ENCODE measurements at regions of chr4 and their contacts with region 1.

Region 1: GRCh38 chr4:119041951-119042560 is 93.6 kb upstream of the MYOZ2 start:
- DNase-seq: peak; percentile 63 to 82
- ATAC-seq: peak; percentile 53 to 55
- H3K4me3 ChIP-seq: peak overlapping the region in 2 of 4 donors; percentile 14 to 20
- H3K27ac ChIP-seq: peak overlapping the region; percentile 94 to 98 (median 96)
- H3K4me1 ChIP-seq: peaks cover 64 to 77% of the 10 kb centered on the region in 2 donors
- H3K27me3 ChIP-seq: no peaks in the 10 kb centered on the region
- CTCF ChIP-seq: peak; percentile 72 to 80 (median 77)
- POLR2A ChIP-seq: peak in 1 of 2 donors; percentile 42

Region 2: GRCh38 chr4:118751629-118752323 is 290.3 kb before region 1 on chr4:
- in situ Hi-C with region 1: no loop called
- intact Hi-C with region 1: loop called (anchors 5 kb)
- DNase-seq: no peak
- ATAC-seq: no peak
- H3K4me3 ChIP-seq: no peak overlapping the region
- H3K27ac ChIP-seq: peak overlapping the region in 2 of 4 donors; percentile 22 to 88
- H3K4me1 ChIP-seq: peaks cover 24 to 75% of the 10 kb centered on the region in 2 donors
- H3K27me3 ChIP-seq: no peaks in the 10 kb centered on the region
- CTCF ChIP-seq: no peak
- POLR2A ChIP-seq: no peak

Region 3: DNA sequence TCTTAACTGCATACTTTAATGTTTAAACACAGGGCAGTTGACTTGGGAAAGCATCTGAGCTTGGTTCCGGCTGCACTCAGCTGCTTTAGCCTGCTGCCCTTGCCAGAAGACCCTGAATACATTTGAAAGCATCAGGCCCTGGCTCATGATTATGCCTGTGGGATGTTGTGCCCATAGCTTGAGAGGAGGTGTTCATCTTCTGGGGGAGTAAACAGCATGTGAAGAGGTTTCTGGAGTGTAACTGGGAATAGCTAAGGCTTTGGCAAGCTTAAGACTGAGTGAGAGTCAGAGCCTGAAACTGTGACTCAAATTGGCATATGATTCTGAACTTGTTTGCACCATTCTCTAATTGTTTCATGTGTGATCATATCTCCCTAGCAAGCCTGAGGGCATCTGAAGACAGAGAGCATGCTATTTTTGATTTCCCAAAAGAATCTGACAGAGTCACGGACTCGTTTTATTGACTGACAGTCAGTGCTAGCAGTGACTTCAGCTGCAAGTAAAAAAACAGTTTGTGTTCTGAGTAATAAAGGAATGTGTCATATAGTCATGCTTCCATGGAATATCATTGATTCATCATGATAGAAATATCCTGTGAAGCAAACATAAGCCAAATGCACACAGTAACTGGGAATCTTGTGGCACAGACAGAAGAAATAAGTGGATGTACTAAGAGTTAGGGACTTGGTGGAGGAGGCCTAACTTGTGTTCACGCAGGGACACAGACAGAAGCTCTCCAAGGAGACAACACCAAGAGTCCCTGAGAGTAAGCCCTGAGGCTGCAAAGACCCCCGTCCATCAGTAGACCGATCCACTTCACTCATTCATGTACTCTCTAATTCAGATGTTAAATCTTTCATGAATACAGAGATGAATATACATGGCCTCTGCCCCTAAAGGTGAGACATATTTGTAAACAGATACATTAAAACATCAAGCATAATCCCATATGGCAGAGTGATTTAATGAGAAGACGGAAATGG is 52.7 kb before region 1 on chr4:
- in situ Hi-C with region 1: no loop called
- intact Hi-C with region 1: loop called (anchors 2 kb)
- DNase-seq: peak; percentile 54 to 59
- ATAC-seq: peak; percentile 65 to 71
- H3K4me3 ChIP-seq: peak overlapping the region in 1 of 4 donors; percentile 12
- H3K27ac ChIP-seq: peak overlapping the region; percentile 87 to 99 (median 91)
- H3K4me1 ChIP-seq: peaks cover 80 to 84% of the 10 kb centered on the region in 2 donors
- H3K27me3 ChIP-seq: no peaks in the 10 kb centered on the region
- CTCF ChIP-seq: no peak
- POLR2A ChIP-seq: peak; percentile 70 to 80

Region 4: DNA sequence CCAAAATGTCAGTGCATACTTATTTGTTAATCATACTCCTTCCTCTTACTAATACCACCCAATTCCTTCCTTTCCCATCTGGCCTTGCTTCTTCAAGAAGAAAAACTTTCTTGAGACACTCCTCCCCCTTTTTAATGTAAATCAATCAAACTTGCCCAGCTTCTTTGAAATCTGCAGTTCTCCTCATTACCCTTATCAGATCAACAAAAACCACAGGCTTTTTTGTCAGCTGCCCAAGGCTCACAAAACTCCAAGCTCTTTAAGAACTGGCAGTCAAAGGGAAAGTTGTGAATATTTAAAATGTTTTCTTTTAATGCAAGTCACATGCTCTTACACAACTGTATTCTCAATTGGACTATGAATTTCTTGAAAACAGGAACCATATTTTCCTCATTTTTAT is 82.3 kb after region 1 on chr4:
- in situ Hi-C with region 1: no loop called
- intact Hi-C with region 1: no loop called
- DNase-seq: no peak
- ATAC-seq: no peak
- H3K4me3 ChIP-seq: no peak overlapping the region
- H3K27ac ChIP-seq: no peak overlapping the region
- H3K4me1 ChIP-seq: no peaks in the 10 kb centered on the region
- H3K27me3 ChIP-seq: no peaks in the 10 kb centered on the region
- CTCF ChIP-seq: no peak
- POLR2A ChIP-seq: no peak

Region 5: DNA sequence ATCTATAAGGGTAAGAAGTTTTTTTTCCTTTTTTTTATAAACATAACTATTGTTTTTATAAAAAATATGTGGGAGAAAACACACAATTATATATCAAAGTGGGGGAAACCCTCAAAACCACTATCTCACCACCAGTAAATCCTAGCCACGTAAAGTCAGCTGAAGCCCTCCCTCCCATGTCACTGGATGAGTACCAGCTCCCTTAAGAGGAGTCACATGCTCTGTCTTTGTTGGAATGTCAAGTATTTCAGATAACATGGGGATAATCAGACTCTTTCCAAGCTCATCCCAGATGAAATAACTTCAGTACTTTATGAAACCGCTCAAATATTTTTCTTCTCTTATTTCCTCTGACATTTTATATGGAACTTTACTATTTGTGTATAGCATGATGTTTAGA is 96.0 kb after region 1 on chr4:
- in situ Hi-C with region 1: loop called in 1 of 4 experiments (anchors 10 kb)
- intact Hi-C with region 1: loop called (anchors 1 kb)
- DNase-seq: no peak
- ATAC-seq: no peak
- H3K4me3 ChIP-seq: peak overlapping the region in 2 of 4 donors; percentile 32 to 42
- H3K27ac ChIP-seq: peak overlapping the region; percentile 72 to 89 (median 79)
- H3K4me1 ChIP-seq: peaks cover 41 to 43% of the 10 kb centered on the region in 2 donors
- H3K27me3 ChIP-seq: no peaks in the 10 kb centered on the region
- CTCF ChIP-seq: no peak
- POLR2A ChIP-seq: no peak

Region 6: DNA sequence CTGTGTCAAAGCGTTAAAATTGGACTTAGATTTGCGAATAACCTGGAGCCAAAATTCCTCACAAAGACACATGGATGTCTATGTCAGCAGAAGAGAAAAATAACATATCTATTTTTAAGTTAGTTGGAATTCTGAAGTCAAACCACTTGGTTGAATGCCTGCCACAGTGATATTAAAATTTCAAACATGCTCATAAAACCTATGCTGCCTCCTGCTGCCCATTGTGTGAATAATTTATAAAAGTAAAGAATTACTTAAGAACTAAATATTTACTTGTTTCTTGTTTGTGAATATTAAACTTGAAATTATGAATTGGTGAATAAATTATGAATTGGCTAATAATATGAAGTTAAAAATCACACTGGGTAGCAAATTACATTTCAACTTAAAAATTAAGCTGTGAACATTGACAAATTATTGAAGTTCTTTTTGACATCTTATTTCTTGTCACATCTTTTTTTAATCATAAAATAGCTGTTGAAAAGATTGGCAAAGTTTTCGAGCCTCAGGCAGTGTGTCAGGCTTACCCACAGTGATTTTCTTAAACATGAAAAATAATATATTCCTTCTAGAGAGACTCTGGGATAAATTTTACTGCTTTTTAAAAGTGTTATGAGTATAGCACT is 244.4 kb after region 1 on chr4:
- in situ Hi-C with region 1: loop called in 3 of 4 experiments (anchors 10 kb)
- intact Hi-C with region 1: loop called (anchors 2 kb)
- DNase-seq: peak in 1 of 2 donors; percentile 28
- ATAC-seq: peak; percentile 73 to 80
- H3K4me3 ChIP-seq: peak overlapping the region in 1 of 4 donors; percentile 6
- H3K27ac ChIP-seq: peak overlapping the region; percentile 64 to 77 (median 69)
- H3K4me1 ChIP-seq: peaks cover 57 to 62% of the 10 kb centered on the region in 2 donors
- H3K27me3 ChIP-seq: no peaks in the 10 kb centered on the region
- CTCF ChIP-seq: peak; percentile 48 to 77 (median 64)
- POLR2A ChIP-seq: no peak

Region 7: DNA sequence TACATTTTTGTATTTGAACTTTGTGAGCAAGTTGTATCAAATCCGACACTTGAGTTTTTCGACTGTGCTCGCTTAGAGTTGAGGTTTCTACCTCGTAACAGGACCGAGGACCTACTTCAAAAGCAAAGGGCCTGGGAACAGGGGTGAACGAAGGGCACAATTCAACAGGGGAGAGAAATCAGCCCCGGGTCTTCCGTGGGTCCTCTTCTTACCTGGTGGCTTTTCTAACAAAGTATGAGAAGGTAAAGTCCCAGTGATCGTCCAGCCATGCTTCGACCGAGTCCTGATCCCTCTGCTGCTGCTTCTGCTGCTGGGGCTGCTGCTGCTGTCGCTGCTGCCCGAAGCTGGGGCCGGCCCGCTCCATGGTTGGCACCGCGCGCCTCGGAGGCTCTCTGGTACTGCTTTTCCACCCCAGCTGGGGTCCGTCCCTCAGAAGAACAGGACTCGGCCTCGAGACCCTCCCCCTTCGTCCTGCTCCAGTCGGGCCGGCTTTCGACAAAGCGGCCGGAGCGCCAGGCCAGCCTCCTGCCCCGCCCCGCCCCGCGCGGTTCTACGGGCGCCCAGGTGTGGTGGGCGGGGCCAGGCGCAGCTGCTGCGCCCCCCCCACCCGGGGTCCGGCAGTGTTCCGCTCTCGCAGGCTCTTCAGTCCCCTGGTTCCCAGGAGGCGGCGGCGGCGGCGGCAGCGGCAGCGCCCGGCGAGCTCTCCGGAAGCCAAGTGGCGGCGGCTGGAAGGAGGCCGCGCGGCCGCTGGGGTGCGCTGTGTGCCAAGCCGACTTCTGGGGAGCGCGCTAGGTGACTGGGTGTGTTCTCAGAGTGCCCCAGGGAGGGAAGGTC is 586.5 kb after region 1 on chr4 and contains the start of gene PDE5A:
- in situ Hi-C with region 1: no loop called
- intact Hi-C with region 1: loop called (anchors 10 kb)
- DNase-seq: peak; percentile 56 to 69
- ATAC-seq: peak; percentile 73 to 79
- H3K4me3 ChIP-seq: peak within 1 kb of the TSS; percentile 85 to 98 (median 90)
- H3K27ac ChIP-seq: peak within 1 kb of the TSS; percentile 78 to 88 (median 86)
- H3K4me1 ChIP-seq: peaks cover 6 to 20% of the 10 kb centered on the region in 2 donors
- H3K27me3 ChIP-seq: no peaks in the 10 kb centered on the region
- CTCF ChIP-seq: peak; percentile 72 to 92 (median 83)
- POLR2A ChIP-seq: peak in 1 of 2 donors; percentile 38
- total RNA-seq, gene PDE5A: 5.5 to 9.9 (median 6.0) TPM